H1 (cell line): ENCODE measurements at regions of chr15 and their contacts with region 1.

Region 1: GRCh38 chr15:60223176-60223575 is 174.6 kb downstream of the ANXA2 start:
- DNase-seq: no peak
- H3K4me3 ChIP-seq: no peak overlapping the region
- H3K27ac ChIP-seq: no peak overlapping the region
- H3K4me1 ChIP-seq: no peaks in the 10 kb centered on the region
- H3K27me3 ChIP-seq: no peaks in the 10 kb centered on the region
- CTCF ChIP-seq: no peak
- EP300 ChIP-seq: no peak
- POLR2A ChIP-seq: no peak
- RAD21 ChIP-seq: no peak

Region 2: DNA sequence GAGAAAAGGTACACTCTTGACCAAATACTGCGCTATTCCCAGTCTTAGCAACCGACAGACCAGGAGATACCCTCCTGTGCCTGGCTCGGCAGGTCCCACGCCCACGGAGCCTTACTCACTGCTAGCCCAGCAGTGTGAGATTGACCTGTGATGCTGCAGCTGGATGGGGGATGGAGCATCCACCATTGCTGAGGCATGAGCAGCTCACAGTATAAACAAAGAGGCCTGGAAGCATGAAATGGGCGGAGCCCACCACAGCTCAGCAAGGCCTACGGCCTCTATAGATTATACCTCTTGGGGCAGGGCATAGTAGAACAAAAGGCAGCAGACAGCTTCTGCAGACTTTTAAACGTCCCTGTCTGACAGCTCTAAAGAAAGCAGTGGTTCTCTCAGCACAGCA is 14.2 kb after region 1 on chr15:
- CTCF ChIA-PET with region 1: interaction called, 18 read pairs
- POLR2A ChIA-PET with region 1: no interaction called
- DNase-seq: no peak
- H3K4me3 ChIP-seq: no peak overlapping the region
- H3K27ac ChIP-seq: no peak overlapping the region
- H3K4me1 ChIP-seq: peaks cover 0 to 4% (median 2%) of the 10 kb centered on the region in 4 experiments; a peak in 2 of 7 replicates
- H3K27me3 ChIP-seq: no peaks in the 10 kb centered on the region
- CTCF ChIP-seq: no peak
- EP300 ChIP-seq: no peak
- POLR2A ChIP-seq: no peak
- RAD21 ChIP-seq: no peak

Region 3: GRCh38 chr15:61112231-61112630 is 889.1 kb after region 1 on chr15:
- CTCF ChIA-PET with region 1: no interaction called
- POLR2A ChIA-PET with region 1: no interaction called
- DNase-seq: no peak
- H3K4me3 ChIP-seq: no peak overlapping the region
- H3K27ac ChIP-seq: no peak overlapping the region
- H3K4me1 ChIP-seq: peaks cover 0 to 5% (median 5%) of the 10 kb centered on the region in 4 experiments; a peak in 3 of 7 replicates
- H3K27me3 ChIP-seq: no peaks in the 10 kb centered on the region; a peak in 1 of 7 replicates
- CTCF ChIP-seq: peak; percentile 11 to 51 (median 35); a peak in 2 of 4 replicates
- EP300 ChIP-seq: no peak
- POLR2A ChIP-seq: no peak
- RAD21 ChIP-seq: peak; percentile 16 to 19; a peak in 2 of 4 replicates